H1 (cell line): ENCODE measurements at regions of chr2 and their contacts with region 1.

Region 1: GRCh38 chr2:135585586-135585985 is 54.3 kb downstream of the R3HDM1 start:
- DNase-seq: peak in 1 of 2 experiments; percentile 2
- H3K4me3 ChIP-seq: no peak overlapping the region
- H3K27ac ChIP-seq: no peak overlapping the region
- H3K4me1 ChIP-seq: peaks cover 0 to 5% (median 3%) of the 10 kb centered on the region in 4 experiments; a peak in 5 of 7 replicates
- H3K27me3 ChIP-seq: no peaks in the 10 kb centered on the region
- CTCF ChIP-seq: peak in 1 of 3 experiments; percentile 36; a peak in 1 of 4 replicates
- EP300 ChIP-seq: no peak
- POLR2A ChIP-seq: no peak
- RAD21 ChIP-seq: peak in 1 of 2 experiments; percentile 14; a peak in 1 of 4 replicates

Region 2: DNA sequence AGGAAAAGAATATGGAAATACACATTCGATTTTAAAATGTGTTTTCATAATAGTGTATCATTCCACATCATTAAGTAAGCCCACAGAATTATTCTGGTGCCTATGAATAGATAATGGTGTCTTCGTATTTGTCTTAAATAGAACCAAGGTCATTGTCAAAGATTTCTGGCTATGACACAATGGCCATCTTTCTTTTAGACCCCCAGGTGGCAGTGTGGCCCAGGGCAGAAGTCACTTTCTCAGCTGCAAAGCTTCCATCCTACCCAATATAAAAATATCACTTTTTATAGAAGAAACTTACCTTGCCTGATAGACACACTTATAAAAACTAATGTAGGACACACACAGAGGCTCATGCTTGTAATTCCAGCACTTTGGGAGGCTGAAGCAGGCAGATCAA is 112.0 kb before region 1 on chr2:
- CTCF ChIA-PET with region 1: interaction called, 11 read pairs
- POLR2A ChIA-PET with region 1: no interaction called
- DNase-seq: no peak
- H3K4me3 ChIP-seq: no peak overlapping the region
- H3K27ac ChIP-seq: no peak overlapping the region
- H3K4me1 ChIP-seq: no peaks in the 10 kb centered on the region
- H3K27me3 ChIP-seq: no peaks in the 10 kb centered on the region
- CTCF ChIP-seq: peak; percentile 34 to 51 (median 43)
- EP300 ChIP-seq: no peak
- POLR2A ChIP-seq: no peak
- RAD21 ChIP-seq: peak; percentile 72 to 76

Region 3: GRCh38 chr2:135573620-135574019 is 12.0 kb before region 1 on chr2:
- CTCF ChIA-PET with region 1: interaction called, 15 read pairs
- POLR2A ChIA-PET with region 1: interaction called, 4 read pairs
- DNase-seq: no peak
- H3K4me3 ChIP-seq: no peak overlapping the region
- H3K27ac ChIP-seq: no peak overlapping the region
- H3K4me1 ChIP-seq: no peaks in the 10 kb centered on the region
- H3K27me3 ChIP-seq: no peaks in the 10 kb centered on the region
- CTCF ChIP-seq: no peak; a peak in 1 of 4 replicates
- EP300 ChIP-seq: no peak
- POLR2A ChIP-seq: no peak
- RAD21 ChIP-seq: no peak

Region 4: DNA sequence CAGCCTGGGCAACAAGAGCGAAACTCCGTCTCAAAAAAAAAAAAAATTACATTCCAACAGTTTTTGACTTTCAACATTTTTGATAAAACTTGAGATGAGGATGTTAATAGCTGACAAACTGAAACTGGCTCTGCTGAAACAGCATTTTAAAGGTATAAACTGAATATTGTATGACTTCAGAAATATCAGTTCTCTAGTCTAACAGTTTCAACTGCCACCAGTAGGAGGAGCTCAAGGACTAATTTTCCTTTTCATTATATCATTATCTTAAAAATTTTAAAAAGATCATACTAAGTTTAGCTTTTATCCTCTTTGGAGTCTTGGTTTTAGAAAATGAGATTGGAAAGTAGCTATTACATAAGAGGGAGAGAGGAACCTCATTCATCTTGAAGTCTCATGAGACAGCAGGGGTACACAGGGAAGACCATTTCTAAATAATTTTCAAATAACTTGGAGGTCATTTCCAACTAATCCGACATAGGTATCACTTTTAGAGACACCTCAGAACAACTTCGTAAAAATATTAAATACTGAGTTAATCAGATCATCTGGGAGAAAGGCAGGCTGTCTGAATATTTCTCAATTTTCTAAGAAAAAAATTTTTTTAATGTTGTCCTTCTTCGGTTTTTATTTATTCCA is 328.3 kb after region 1 on chr2:
- CTCF ChIA-PET with region 1: no interaction called
- POLR2A ChIA-PET with region 1: no interaction called
- DNase-seq: no peak
- H3K4me3 ChIP-seq: no peak overlapping the region
- H3K27ac ChIP-seq: no peak overlapping the region
- H3K4me1 ChIP-seq: no peaks in the 10 kb centered on the region
- H3K27me3 ChIP-seq: no peaks in the 10 kb centered on the region
- CTCF ChIP-seq: peak in 2 of 3 experiments; percentile 36 to 47; a peak in 2 of 4 replicates
- EP300 ChIP-seq: no peak
- POLR2A ChIP-seq: no peak
- RAD21 ChIP-seq: peak; percentile 59 to 75